ENCODE measurements at regions of chr14 and their contacts with region 1.

Region 1: GRCh38 chr14:31357279-31357678 is 63.1 kb downstream of the HEATR5A start:
- DNase-seq: no peak
- ATAC-seq: no peak
- H3K4me3 ChIP-seq: no peak overlapping the region
- H3K27ac ChIP-seq: no peak overlapping the region
- H3K4me1 ChIP-seq: no peaks in the 10 kb centered on the region
- H3K27me3 ChIP-seq: no peaks in the 10 kb centered on the region

Region 2: DNA sequence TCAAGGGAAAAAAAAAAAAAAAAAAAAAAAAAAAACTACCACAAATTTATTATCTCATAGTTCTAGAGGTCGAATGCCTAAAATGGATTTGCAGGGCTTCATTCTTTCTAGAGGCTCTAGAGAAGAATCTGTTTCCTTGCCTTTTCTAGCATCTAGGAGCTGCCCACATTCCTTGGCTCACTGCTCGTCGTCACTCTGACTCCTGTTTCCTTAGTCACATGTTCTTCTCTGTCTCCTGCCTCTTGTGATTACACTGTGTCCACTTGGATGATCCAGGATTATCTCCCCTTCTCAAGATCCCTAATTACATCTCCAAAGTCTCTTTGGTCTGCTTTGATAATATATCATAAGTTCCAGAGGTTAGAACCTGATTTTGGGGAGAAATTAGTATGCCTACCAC is 238.4 kb before region 1 on chr14:
- intact Hi-C with region 1: loop called (anchors 10 kb)
- DNase-seq: no peak
- ATAC-seq: no peak
- H3K4me3 ChIP-seq: no peak overlapping the region
- H3K27ac ChIP-seq: no peak overlapping the region
- H3K4me1 ChIP-seq: no peaks in the 10 kb centered on the region
- H3K27me3 ChIP-seq: no peaks in the 10 kb centered on the region

Region 3: GRCh38 chr14:31127690-31128089 is 229.6 kb before region 1 on chr14:
- intact Hi-C with region 1: loop called in 1 of 2 experiments (anchors 10 kb)
- DNase-seq: no peak
- ATAC-seq: no peak
- H3K4me3 ChIP-seq: no peak overlapping the region
- H3K27ac ChIP-seq: no peak overlapping the region
- H3K4me1 ChIP-seq: no peaks in the 10 kb centered on the region
- H3K27me3 ChIP-seq: no peaks in the 10 kb centered on the region

Region 4: GRCh38 chr14:31207755-31208545 is 149.3 kb before region 1 on chr14 and contains the start of gene HECTD1:
- intact Hi-C with region 1: loop called in 1 of 2 experiments (anchors 5 kb)
- DNase-seq: peak; percentile 88 to 97
- ATAC-seq: peak; percentile 97
- H3K4me3 ChIP-seq: peak within 1 kb of the TSS; percentile 80 to 89
- H3K27ac ChIP-seq: peak within 1 kb of the TSS; percentile 92 to 94
- H3K4me1 ChIP-seq: no peaks in the 10 kb centered on the region
- H3K27me3 ChIP-seq: no peaks in the 10 kb centered on the region
- total RNA-seq, gene HECTD1: 137 to 164 TPM

Region 5: GRCh38 chr14:31400031-31400638 is 42.9 kb after region 1 on chr14:
- intact Hi-C with region 1: no loop called
- DNase-seq: no peak
- ATAC-seq: no peak
- H3K4me3 ChIP-seq: no peak overlapping the region
- H3K27ac ChIP-seq: no peak overlapping the region
- H3K4me1 ChIP-seq: peaks cover 0 to 1% of the 10 kb centered on the region in 2 donors
- H3K27me3 ChIP-seq: no peaks in the 10 kb centered on the region

Region 6: GRCh38 chr14:31435276-31435675 is 78.0 kb after region 1 on chr14:
- intact Hi-C with region 1: no loop called
- DNase-seq: no peak
- ATAC-seq: peak; percentile 82
- H3K4me3 ChIP-seq: no peak overlapping the region
- H3K27ac ChIP-seq: peak overlapping the region in 1 of 2 donors; percentile 67
- H3K4me1 ChIP-seq: no peaks in the 10 kb centered on the region
- H3K27me3 ChIP-seq: no peaks in the 10 kb centered on the region